Activated B cell treated with CpG ODN at 0.5 μM for 24 hours (primary cell): ENCODE measurements at regions of chr6 and their contacts with region 1.

Region 1: GRCh38 chr6:34696739-34697543 is at the start of gene ILRUN:
- DNase-seq: peak; percentile 95
- ATAC-seq: peak; percentile 87
- H3K4me3 Mint-ChIP-seq: peak within 1 kb of the TSS; percentile 98
- H3K27ac Mint-ChIP-seq: peak within 1 kb of the TSS; percentile 99
- H3K4me1 Mint-ChIP-seq: peaks cover 47% of the 10 kb centered on the region
- H3K27me3 Mint-ChIP-seq: no peaks in the 10 kb centered on the region
- CTCF ChIP-seq: no peak
- total RNA-seq, gene ILRUN: 71.0 and 84.4 TPM in 2 replicates

Region 2: GRCh38 chr6:34526992-34527728 is 169.8 kb before region 1 on chr6:
- CTCF ChIA-PET with region 1: no interaction called
- POLR2A ChIA-PET with region 1: no interaction called
- intact Hi-C with region 1: loop called (anchors 2 kb)
- DNase-seq: peak; percentile 92
- ATAC-seq: peak; percentile 98
- H3K4me3 Mint-ChIP-seq: peak overlapping the region; percentile 69
- H3K27ac Mint-ChIP-seq: peak overlapping the region; percentile 66
- H3K4me1 Mint-ChIP-seq: peaks cover 7% of the 10 kb centered on the region
- H3K27me3 Mint-ChIP-seq: no peaks in the 10 kb centered on the region
- CTCF ChIP-seq: no peak

Region 3: GRCh38 chr6:34572585-34572984 is 124.4 kb before region 1 on chr6:
- CTCF ChIA-PET with region 1: no interaction called
- POLR2A ChIA-PET with region 1: no interaction called
- intact Hi-C with region 1: no loop called
- DNase-seq: no peak
- ATAC-seq: no peak
- H3K4me3 Mint-ChIP-seq: no peak overlapping the region
- H3K27ac Mint-ChIP-seq: no peak overlapping the region
- H3K4me1 Mint-ChIP-seq: no peaks in the 10 kb centered on the region
- H3K27me3 Mint-ChIP-seq: no peaks in the 10 kb centered on the region
- CTCF ChIP-seq: no peak

Region 4: GRCh38 chr6:34638834-34639736 is 57.9 kb before region 1 on chr6:
- CTCF ChIA-PET with region 1: interaction called, 3 read pairs
- POLR2A ChIA-PET with region 1: interaction called, 6 read pairs
- intact Hi-C with region 1: loop called (anchors 1 kb)
- DNase-seq: no peak
- ATAC-seq: peak; percentile 84
- H3K4me3 Mint-ChIP-seq: peak overlapping the region; percentile 72
- H3K27ac Mint-ChIP-seq: peak overlapping the region; percentile 86
- H3K4me1 Mint-ChIP-seq: peaks cover 38% of the 10 kb centered on the region
- H3K27me3 Mint-ChIP-seq: no peaks in the 10 kb centered on the region
- CTCF ChIP-seq: no peak

Region 5: GRCh38 chr6:34656378-34657036 is 40.4 kb before region 1 on chr6:
- CTCF ChIA-PET with region 1: no interaction called
- POLR2A ChIA-PET with region 1: interaction called, 25 read pairs
- intact Hi-C with region 1: loop called (anchors 5 kb)
- DNase-seq: no peak
- ATAC-seq: peak; percentile 79
- H3K4me3 Mint-ChIP-seq: peak overlapping the region; percentile 74
- H3K27ac Mint-ChIP-seq: peak overlapping the region; percentile 92
- H3K4me1 Mint-ChIP-seq: peaks cover 58% of the 10 kb centered on the region
- H3K27me3 Mint-ChIP-seq: no peaks in the 10 kb centered on the region
- CTCF ChIP-seq: no peak

Region 6: GRCh38 chr6:34671801-34672656 is 24.9 kb before region 1 on chr6:
- CTCF ChIA-PET with region 1: interaction called, 4 read pairs
- POLR2A ChIA-PET with region 1: interaction called, 32 read pairs
- intact Hi-C with region 1: loop called (anchors 1 kb)
- DNase-seq: peak; percentile 49
- ATAC-seq: peak; percentile 94
- H3K4me3 Mint-ChIP-seq: peak overlapping the region; percentile 74
- H3K27ac Mint-ChIP-seq: peak overlapping the region; percentile 97
- H3K4me1 Mint-ChIP-seq: peaks cover 78% of the 10 kb centered on the region
- H3K27me3 Mint-ChIP-seq: no peaks in the 10 kb centered on the region
- CTCF ChIP-seq: no peak

Region 7: GRCh38 chr6:34680802-34681515 is 16.0 kb before region 1 on chr6:
- CTCF ChIA-PET with region 1: no interaction called
- POLR2A ChIA-PET with region 1: interaction called, 28 read pairs
- intact Hi-C with region 1: loop called (anchors 1 kb)
- DNase-seq: no peak
- ATAC-seq: peak; percentile 28
- H3K4me3 Mint-ChIP-seq: peak overlapping the region; percentile 19
- H3K27ac Mint-ChIP-seq: peak overlapping the region; percentile 72
- H3K4me1 Mint-ChIP-seq: peaks cover 54% of the 10 kb centered on the region
- H3K27me3 Mint-ChIP-seq: no peaks in the 10 kb centered on the region
- CTCF ChIP-seq: no peak

Region 8: DNA sequence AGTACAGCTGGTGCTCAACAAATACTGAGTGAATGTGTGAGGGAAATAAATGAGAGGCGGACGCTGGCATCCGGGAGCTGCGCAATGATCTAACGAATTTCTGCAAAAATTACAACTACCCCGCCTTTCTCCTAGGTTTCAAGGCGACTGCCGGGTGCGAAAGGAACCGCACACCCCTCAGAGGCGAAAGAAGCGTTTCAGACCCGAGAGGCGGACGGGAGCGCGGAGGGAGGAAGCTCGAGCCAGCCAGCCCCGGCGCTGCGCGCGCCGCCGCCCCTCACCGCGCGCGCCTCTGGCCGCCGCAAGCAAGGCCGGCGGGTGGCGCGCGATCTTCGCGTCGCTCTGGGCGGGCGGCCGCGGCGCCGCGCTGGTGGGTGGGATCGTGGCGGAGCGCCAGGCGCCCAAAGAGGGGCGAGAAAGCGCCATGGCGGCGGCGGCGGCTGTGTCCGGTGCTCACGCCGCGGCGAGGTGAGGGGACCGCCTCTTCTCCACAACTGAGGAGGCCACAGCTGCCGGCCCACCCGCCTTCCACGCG is 94.8 kb after region 1 on chr6 and contains the start of gene BLTP3A:
- CTCF ChIA-PET with region 1: no interaction called
- POLR2A ChIA-PET with region 1: no interaction called
- intact Hi-C with region 1: loop called (anchors 1 kb)
- DNase-seq: peak; percentile 78
- ATAC-seq: peak; percentile 93
- H3K4me3 Mint-ChIP-seq: peak within 1 kb of the TSS; percentile 96
- H3K27ac Mint-ChIP-seq: peak within 1 kb of the TSS; percentile 93
- H3K4me1 Mint-ChIP-seq: peaks cover 24% of the 10 kb centered on the region
- H3K27me3 Mint-ChIP-seq: no peaks in the 10 kb centered on the region
- CTCF ChIP-seq: no peak
- total RNA-seq, gene BLTP3A: 10.8 and 12.6 TPM in 2 replicates